CD4-positive, alpha-beta T cell (primary cell): ENCODE measurements at regions of chr20 and their contacts with region 1.

Region 1: GRCh38 chr20:43691928-43692524 is 25.1 kb downstream of the MYBL2 start:
- DNase-seq: peak; percentile 11 to 68 (median 34)
- ATAC-seq: no peak
- H3K4me3 ChIP-seq: no peak overlapping the region
- H3K4me3 Mint-ChIP-seq: no peak overlapping the region
- H3K27ac ChIP-seq: no peak overlapping the region
- H3K27ac Mint-ChIP-seq: no peak overlapping the region
- H3K4me1 ChIP-seq: no peaks in the 10 kb centered on the region
- H3K4me1 Mint-ChIP-seq: no peaks in the 10 kb centered on the region
- H3K27me3 ChIP-seq: no peaks in the 10 kb centered on the region
- H3K27me3 Mint-ChIP-seq: no peaks in the 10 kb centered on the region
- CTCF ChIP-seq: peak; percentile 52

Region 2: DNA sequence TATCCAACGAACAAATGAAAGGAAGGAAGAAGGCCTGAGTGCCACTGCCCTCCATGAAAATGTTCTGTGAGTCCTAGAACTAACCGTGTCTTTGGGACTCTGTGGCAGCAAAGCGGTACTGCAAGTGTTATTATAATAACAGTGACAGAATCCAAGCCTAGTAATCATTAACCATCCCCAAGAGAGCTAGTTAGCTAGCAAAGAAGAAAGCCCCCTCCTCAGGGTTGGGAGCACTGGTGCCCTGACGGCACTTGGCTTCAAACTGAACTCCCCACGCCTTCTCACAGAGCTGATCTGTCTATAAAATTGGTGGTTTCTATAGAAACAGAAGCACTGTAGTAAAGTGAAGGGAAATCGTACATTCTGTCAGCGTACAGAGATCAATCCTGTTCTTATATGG is 742.1 kb before region 1 on chr20:
- CTCF ChIA-PET with region 1: no interaction called
- POLR2A ChIA-PET with region 1: no interaction called
- intact Hi-C with region 1: no loop called
- DNase-seq: no peak
- ATAC-seq: no peak
- H3K4me3 ChIP-seq: no peak overlapping the region
- H3K4me3 Mint-ChIP-seq: no peak overlapping the region
- H3K27ac ChIP-seq: no peak overlapping the region
- H3K27ac Mint-ChIP-seq: no peak overlapping the region
- H3K4me1 ChIP-seq: no peaks in the 10 kb centered on the region
- H3K4me1 Mint-ChIP-seq: no peaks in the 10 kb centered on the region
- H3K27me3 ChIP-seq: no peaks in the 10 kb centered on the region
- H3K27me3 Mint-ChIP-seq: no peaks in the 10 kb centered on the region
- CTCF ChIP-seq: no peak

Region 3: DNA sequence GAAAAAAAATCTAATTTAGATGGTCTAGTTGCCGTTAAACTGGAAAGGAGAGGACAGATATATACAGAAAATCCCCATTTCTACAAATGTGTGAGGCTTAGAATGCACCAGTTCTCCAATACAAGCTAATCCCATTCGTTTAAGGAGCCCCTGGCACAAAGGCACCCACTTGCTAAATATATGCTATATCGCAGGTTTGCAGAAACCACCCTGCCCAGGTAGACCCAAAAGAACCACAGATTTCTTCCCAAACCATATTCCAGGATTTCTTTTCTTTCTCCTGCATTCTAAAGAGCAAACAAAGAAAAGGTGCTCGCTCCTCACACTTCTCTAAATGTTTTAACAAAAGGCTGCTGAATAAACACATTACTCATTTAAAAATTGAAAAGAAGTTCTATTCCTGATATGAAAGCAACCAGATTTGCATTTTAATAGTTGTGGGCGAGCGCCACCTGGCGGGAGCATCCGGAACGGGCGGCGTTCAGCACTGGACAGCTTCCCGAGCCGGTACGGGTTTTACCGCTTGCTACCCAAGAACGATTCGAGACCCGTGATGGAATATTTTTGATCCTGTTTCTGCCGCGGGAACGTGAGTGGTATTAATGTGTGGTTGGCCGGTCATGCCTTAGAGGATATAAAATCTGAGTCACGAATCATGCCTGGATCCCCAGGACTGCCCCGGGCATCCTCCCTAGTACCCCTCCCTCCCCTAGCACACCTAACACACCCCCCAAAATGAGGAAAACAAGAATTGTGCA is 504.4 kb before region 1 on chr20:
- CTCF ChIA-PET with region 1: no interaction called
- POLR2A ChIA-PET with region 1: no interaction called
- intact Hi-C with region 1: no loop called
- DNase-seq: peak; percentile 4 to 60 (median 32)
- ATAC-seq: no peak
- H3K4me3 ChIP-seq: no peak overlapping the region
- H3K4me3 Mint-ChIP-seq: no peak overlapping the region
- H3K27ac ChIP-seq: no peak overlapping the region
- H3K27ac Mint-ChIP-seq: no peak overlapping the region
- H3K4me1 ChIP-seq: peaks cover 8% of the 10 kb centered on the region
- H3K4me1 Mint-ChIP-seq: peaks cover 11% of the 10 kb centered on the region
- H3K27me3 ChIP-seq: peaks cover 24 to 31% of the 10 kb centered on the region in 2 experiments
- H3K27me3 Mint-ChIP-seq: peaks cover 64% of the 10 kb centered on the region
- CTCF ChIP-seq: peak; percentile 77

Region 4: GRCh38 chr20:43537921-43538877 is 153.8 kb before region 1 on chr20:
- CTCF ChIA-PET with region 1: interaction called, 12 read pairs
- POLR2A ChIA-PET with region 1: no interaction called
- intact Hi-C with region 1: loop called in 1 of 2 experiments (anchors 1 kb)
- DNase-seq: peak; percentile 16 to 62 (median 30)
- ATAC-seq: peak; percentile 56
- H3K4me3 ChIP-seq: no peak overlapping the region
- H3K4me3 Mint-ChIP-seq: no peak overlapping the region
- H3K27ac ChIP-seq: no peak overlapping the region
- H3K27ac Mint-ChIP-seq: no peak overlapping the region
- H3K4me1 ChIP-seq: no peaks in the 10 kb centered on the region
- H3K4me1 Mint-ChIP-seq: no peaks in the 10 kb centered on the region
- H3K27me3 ChIP-seq: no peaks in the 10 kb centered on the region
- H3K27me3 Mint-ChIP-seq: no peaks in the 10 kb centered on the region
- CTCF ChIP-seq: peak; percentile 92